Astrocyte of the cerebellum (primary cell): ENCODE measurements at regions of chr18 and their contacts with region 1.

Region 1: DNA sequence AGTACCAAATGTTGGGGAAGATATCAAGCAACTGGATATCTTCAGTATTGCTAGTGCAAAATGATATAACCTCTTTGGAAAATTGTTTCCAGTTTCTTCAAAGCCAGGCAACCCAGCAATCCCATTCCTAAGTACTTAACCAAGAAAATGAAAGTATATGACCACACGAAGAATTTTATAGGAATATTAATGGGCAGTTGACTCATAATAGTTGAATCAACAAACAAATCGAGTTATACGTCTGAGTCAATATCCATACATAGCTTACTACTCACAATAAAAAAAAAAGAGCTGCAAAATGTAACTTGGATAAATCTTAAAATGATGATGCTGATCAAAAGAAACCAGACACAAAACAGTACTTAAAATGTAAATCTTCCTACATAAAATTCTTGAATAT is 810.4 kb downstream of the METTL4 start:
- DNase-seq: no peak
- H3K4me3 ChIP-seq: no peak overlapping the region
- CTCF ChIP-seq: no peak

Region 2: GRCh38 chr18:1665079-1665478 is 95.8 kb before region 1 on chr18:
- in situ Hi-C with region 1: loop called (anchors 5 kb)
- DNase-seq: no peak
- H3K4me3 ChIP-seq: no peak overlapping the region
- CTCF ChIP-seq: no peak

Region 3: DNA sequence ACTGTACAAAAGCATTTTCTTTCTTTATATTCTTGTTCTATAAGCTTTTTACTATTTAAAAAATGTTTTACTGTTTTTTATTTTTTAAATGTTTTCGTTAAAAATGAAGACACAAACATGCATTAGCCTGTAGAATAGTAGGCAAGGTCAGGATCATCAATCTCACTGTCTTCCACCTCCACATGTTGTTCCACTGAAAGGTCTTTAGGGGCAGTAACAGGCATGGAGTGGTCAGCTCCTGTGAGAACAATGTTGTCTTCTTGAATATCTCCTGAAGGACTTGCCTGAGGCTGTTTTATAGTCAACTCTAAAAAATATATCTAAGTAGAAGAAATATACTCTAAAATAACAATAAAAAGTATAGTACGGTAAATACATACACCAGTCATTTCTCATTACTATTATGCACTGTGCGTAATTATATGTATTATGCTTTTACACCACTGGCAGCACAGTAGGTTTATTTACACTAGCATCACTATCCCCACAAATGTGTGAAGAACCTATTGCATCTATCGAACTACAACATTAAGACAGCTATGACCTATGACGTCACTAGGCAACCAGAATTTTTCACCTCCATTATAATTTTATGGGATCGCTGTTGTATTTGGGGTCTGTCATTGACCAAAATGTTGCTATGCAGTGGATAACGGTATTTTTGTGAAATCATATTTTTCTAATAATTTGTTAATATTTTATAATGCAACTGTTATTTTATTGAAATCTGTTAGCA is 46.1 kb after region 1 on chr18:
- in situ Hi-C with region 1: no loop called
- DNase-seq: no peak
- H3K4me3 ChIP-seq: no peak overlapping the region
- CTCF ChIP-seq: no peak

Region 4: DNA sequence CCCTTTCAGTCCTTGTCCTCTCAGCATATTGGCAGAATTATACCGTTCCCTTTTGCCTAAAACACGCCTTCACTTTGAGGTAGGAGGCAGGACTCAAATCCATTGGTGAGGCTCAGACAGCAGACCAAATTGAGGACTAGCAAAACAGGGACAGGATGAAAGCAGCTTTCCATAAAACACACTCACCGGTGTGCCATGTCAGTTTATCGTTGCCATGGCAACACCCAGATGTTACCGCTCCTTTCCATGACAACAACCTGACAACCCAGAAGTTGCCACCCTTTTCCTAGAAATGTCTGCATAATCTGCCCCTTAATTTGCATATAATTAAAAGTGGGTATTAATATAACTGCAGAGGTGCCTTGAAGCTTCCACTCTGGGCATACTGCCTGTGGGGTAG is 80.0 kb after region 1 on chr18:
- in situ Hi-C with region 1: no loop called
- DNase-seq: no peak
- H3K4me3 ChIP-seq: no peak overlapping the region
- CTCF ChIP-seq: no peak